Aorta (tissue), 5 donors: ENCODE measurements at regions of chr22 and their contacts with region 1.

Region 1: DNA sequence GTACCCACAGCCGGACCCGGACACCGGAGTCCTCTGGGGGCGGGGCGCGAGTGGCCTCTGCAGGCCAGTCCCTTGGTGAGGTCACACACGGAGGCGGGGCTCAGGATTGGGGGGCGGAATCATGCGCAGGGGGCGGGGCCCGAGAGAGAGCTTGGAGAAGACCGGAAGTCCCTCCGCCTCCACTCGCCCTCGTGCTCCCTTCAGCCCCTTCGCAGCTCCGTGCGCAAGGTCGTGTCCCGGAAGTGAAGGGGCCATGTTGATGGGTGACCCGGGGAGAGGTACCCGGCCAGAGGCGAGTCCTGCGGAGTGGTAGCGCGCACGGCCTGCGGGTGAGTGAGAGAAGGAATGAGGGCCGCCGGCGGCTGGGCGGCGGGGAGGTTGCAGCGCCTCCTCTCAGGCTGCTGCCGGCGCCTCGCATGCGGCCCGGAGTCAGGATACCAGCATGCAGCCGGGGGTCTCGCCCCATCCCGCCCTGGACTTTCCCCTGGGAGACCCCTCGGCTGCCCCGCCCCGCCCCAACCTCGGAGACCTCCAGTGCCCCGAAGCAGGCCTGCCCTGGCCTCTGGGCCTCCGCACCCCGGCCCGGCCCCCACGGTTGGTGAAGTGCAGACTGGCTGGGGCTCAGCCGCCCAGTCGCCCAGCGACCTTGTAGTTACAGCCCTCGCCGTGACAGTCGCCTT is at the start of gene MIEF1:
- DNase-seq: peak; percentile 99 to 100
- ATAC-seq: peak; percentile 98
- H3K4me3 ChIP-seq: peak within 1 kb of the TSS; percentile 86 to 96
- H3K27ac ChIP-seq: peak within 1 kb of the TSS in 1 of 2 donors; percentile 34
- H3K4me1 ChIP-seq: peaks cover 2 to 11% of the 10 kb centered on the region in 2 donors
- H3K27me3 ChIP-seq: no peaks in the 10 kb centered on the region
- total RNA-seq, gene MIEF1: 15.5 to 20.1 TPM

Region 2: DNA sequence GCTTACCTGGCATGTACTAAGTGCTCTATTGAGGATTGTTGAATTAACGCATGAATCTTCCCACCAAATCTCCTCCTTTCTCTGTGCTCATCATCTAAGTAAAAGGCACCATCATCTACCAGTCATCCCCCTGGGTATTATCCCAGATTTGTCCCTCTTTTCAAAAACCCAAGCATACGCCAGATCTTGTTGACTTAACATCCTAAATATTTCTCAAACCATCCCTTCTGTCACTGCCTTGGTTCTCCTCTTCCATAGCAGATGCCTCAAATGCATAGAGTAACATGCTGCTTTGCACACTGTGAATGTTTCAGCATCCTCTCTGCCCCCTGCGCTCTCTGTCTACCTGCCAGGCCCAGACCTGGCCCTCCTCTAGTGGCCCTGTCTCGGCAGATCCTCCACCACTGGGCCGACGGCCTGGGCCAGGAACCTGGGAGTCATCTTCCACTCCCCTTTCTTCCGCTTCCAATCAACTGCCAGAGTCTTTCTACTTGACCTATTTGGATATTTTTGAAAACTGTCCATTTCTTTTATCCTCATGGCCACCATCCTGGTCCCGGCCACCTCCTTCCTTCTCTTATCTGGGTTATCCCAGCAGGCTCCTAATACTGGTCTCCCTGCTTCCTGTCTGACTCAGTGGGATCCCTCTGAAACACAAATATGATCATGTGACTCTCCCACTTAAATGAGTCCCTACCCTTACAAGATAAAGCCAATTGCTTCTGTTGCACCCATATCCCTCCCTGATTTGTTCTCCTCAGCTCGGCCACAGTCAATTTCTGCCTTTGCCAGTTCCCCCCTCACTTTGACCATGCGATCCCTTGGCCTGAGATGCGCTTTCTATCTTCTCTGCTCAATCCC is 106.1 kb before region 1 on chr22:
- intact Hi-C with region 1: loop called (anchors 5 to 10 kb)
- DNase-seq: peak in 1 of 2 donors; percentile 67
- ATAC-seq: no peak
- H3K4me3 ChIP-seq: no peak overlapping the region
- H3K27ac ChIP-seq: no peak overlapping the region
- H3K4me1 ChIP-seq: no peaks in the 10 kb centered on the region
- H3K27me3 ChIP-seq: no peaks in the 10 kb centered on the region

Region 3: GRCh38 chr22:39545386-39546365 is 43.4 kb after region 1 on chr22:
- intact Hi-C with region 1: no loop called
- DNase-seq: peak in 1 of 2 donors; percentile 85
- ATAC-seq: peak; percentile 44
- H3K4me3 ChIP-seq: no peak overlapping the region
- H3K27ac ChIP-seq: no peak overlapping the region
- H3K4me1 ChIP-seq: no peaks in the 10 kb centered on the region
- H3K27me3 ChIP-seq: no peaks in the 10 kb centered on the region